ENCODE measurements at regions of chr20 and their contacts with region 1.

Region 1: DNA sequence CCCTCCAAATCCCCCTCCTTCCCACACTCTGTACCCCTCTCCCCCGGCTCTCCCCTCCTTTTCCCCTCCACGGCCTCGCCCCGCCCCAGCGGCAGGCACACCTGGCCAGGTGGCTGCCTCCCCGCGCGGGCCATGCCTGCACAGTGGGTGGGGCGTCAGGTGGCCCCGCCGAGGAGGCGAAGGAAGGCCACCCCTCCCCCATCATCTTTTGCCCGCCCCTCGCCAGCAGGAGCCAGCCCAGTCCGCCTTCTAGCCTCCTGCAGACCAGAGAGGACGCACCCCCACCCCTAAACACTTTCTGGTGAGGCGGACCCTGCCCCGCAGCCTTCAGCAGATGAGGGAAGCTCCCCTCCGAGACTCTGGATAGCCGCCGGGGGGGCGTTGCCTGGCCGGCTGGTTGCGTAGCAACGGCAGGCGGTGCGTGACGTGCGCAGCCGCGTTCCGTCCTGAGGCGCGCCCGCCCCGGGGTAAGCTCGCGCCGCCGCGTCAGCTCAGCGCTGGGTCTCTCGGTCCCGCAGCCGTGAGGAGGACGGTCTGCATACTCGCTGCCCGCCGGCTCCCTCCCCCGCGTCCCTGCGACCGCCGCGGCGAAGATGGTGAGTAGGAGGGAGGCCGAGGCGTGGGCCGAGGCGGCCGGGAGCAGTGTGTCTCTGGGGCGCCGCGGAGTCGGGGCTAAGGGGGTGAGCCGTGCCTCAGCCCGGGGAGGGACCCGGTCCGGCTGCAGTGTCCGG is at the start of gene DSTN:
- DNase-seq: peak; percentile 94 to 96 (median 95)
- ATAC-seq: peak; percentile 85 to 93 (median 90)
- H3K4me3 ChIP-seq: peak within 1 kb of the TSS; percentile 45 to 100 (median 93)
- H3K27ac ChIP-seq: peak within 1 kb of the TSS; percentile 91 to 100 (median 99)
- H3K4me1 ChIP-seq: peaks cover 0 to 47% (median 37%) of the 10 kb centered on the region in 12 donors
- H3K27me3 ChIP-seq: no peaks in the 10 kb centered on the region
- CTCF ChIP-seq: no peak
- POLR2A ChIP-seq: peak; percentile 21 to 98
- total RNA-seq, gene DSTN: 447 to 697 (median 546) TPM

Region 2: DNA sequence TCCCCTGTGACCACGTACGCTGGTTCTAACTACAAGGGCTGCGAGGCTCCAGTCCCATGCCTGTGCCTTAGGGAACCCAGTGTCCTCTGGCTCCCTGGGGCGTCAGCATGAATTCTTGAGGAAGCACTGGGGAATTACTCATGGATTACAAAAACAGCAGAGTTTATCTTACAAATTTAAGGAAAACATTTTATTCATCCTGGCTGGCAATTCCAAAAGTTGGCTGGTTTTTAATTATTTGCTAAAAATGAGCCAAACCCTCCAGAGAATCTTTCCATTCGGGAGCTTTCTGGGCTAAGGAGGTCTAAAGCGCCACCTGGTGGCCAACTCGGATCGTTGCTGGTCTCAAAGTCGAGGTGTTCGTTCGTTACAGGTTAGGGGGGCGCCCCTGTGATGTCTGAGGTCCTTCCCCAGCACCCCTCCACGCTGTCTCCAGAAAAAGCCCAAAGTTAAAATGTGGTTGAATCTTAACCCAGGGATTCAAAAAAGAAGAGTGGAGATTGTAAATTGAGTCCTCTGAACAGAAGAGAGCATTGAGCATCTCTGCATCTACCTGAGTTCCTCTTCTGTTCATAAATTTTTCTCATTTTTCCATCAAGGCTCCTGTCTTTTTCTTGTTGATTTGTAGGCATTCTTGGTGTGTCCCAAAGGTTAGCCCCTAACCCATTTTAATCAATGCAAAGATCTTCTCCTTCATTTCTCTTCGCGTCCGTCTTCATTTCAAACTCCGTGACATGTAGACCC is 138.0 kb before region 1 on chr20:
- intact Hi-C with region 1: no loop called
- DNase-seq: peak in 4 of 5 donors; percentile 16 to 40 (median 34)
- ATAC-seq: no peak
- H3K4me3 ChIP-seq: no peak overlapping the region
- H3K27ac ChIP-seq: no peak overlapping the region
- H3K4me1 ChIP-seq: peaks cover 0 to 5% (median 0%) of the 10 kb centered on the region in 12 donors
- H3K27me3 ChIP-seq: peaks cover 0 to 52% (median 15%) of the 10 kb centered on the region in 9 donors
- CTCF ChIP-seq: peak; percentile 62 to 93 (median 87)
- POLR2A ChIP-seq: no peak

Region 3: DNA sequence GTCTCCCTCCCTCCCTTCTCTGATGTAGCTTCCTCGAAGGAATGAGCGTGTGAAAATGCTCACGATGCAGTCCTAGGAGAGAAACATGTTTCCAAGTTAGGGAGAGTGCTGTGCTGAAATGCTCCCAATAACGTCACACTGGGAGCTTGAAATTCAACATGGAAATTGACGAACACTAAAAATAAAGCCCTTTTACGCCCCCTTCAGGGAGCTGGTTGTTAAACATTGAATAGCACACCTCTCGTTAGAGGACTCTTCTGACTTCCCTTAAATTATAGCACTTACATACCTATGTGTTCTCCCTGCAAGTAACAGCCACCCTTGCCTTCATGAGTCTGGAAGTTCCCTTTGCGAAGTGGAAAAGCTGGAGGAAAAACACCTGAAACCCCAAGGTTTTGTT is 127.2 kb before region 1 on chr20:
- intact Hi-C with region 1: no loop called
- DNase-seq: no peak
- ATAC-seq: no peak
- H3K4me3 ChIP-seq: no peak overlapping the region
- H3K27ac ChIP-seq: no peak overlapping the region
- H3K4me1 ChIP-seq: no peaks in the 10 kb centered on the region
- H3K27me3 ChIP-seq: peaks cover 0 to 41% (median 5%) of the 10 kb centered on the region in 9 donors
- CTCF ChIP-seq: no peak
- POLR2A ChIP-seq: no peak

Region 4: GRCh38 chr20:17536944-17537444 is 32.8 kb before region 1 on chr20:
- intact Hi-C with region 1: loop called in 3 of 10 experiments (anchors 2 to 5 kb)
- DNase-seq: peak in 4 of 5 donors; percentile 54 to 75 (median 69)
- ATAC-seq: peak; percentile 93 to 99 (median 98)
- H3K4me3 ChIP-seq: no peak overlapping the region
- H3K27ac ChIP-seq: peak overlapping the region in 2 of 12 donors; percentile 7 to 64
- H3K4me1 ChIP-seq: peaks cover 0 to 11% (median 0%) of the 10 kb centered on the region in 12 donors
- H3K27me3 ChIP-seq: no peaks in the 10 kb centered on the region
- CTCF ChIP-seq: peak; percentile 72 to 93 (median 88)
- POLR2A ChIP-seq: no peak

Region 5: DNA sequence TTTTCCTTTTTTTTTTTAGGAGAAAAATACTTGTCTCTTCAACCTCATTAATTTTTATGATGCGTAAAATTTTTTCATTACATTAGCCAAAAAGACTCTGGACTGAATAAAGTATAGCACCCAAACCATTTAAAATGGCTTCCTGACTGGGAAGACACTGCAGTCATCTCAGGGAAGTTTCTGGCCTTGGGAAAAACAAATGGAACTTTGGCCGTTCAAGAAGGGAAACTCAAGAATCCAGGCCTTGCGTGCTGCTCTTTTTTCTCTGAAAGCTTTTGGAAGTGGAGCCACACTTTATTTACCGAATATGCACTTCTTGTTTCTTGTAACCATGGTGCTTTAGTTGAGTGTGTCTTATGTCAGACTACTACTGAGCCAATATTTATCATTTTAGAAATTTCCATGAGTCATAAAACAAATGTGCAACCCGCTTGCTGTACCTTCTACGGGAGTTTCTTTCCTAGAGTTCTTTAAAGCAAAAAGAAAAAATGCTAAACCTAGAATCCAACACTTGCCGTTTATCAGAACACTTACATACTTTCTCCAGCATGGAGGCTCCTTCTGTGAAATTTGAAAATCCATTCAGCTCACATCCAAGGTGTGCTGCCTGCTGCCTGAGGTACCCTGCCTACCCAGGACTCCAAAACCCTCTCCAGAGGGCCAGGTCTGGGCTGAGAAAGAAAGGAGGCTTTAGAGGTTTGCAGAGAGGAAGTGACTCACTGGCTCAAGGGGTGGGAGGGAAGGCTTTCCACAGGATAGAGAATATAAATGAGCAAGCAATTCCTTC is 11.4 kb before region 1 on chr20:
- intact Hi-C with region 1: loop called in 1 of 10 experiments (anchors 2 kb)
- DNase-seq: peak in 4 of 5 donors; percentile 37 to 69 (median 66)
- ATAC-seq: peak; percentile 52 to 89 (median 84)
- H3K4me3 ChIP-seq: peak overlapping the region in 4 of 12 donors; percentile 2 to 35 (median 12)
- H3K27ac ChIP-seq: peak overlapping the region in 11 of 12 donors; percentile 51 to 89 (median 78)
- H3K4me1 ChIP-seq: peaks cover 0 to 46% (median 24%) of the 10 kb centered on the region in 12 donors
- H3K27me3 ChIP-seq: no peaks in the 10 kb centered on the region
- CTCF ChIP-seq: no peak
- POLR2A ChIP-seq: peak in 1 of 2 donors; percentile 45

Region 6: GRCh38 chr20:17590245-17590644 is 20.5 kb after region 1 on chr20:
- intact Hi-C with region 1: loop called in 1 of 10 experiments (anchors 2 kb)
- DNase-seq: no peak
- ATAC-seq: peak in 3 of 4 donors; percentile 16 to 48 (median 43)
- H3K4me3 ChIP-seq: peak overlapping the region in 4 of 12 donors; percentile 3 to 11 (median 6)
- H3K27ac ChIP-seq: peak overlapping the region; percentile 16 to 80 (median 59)
- H3K4me1 ChIP-seq: peaks cover 14 to 97% (median 75%) of the 10 kb centered on the region in 12 donors
- H3K27me3 ChIP-seq: no peaks in the 10 kb centered on the region
- CTCF ChIP-seq: no peak
- POLR2A ChIP-seq: no peak

Region 7: DNA sequence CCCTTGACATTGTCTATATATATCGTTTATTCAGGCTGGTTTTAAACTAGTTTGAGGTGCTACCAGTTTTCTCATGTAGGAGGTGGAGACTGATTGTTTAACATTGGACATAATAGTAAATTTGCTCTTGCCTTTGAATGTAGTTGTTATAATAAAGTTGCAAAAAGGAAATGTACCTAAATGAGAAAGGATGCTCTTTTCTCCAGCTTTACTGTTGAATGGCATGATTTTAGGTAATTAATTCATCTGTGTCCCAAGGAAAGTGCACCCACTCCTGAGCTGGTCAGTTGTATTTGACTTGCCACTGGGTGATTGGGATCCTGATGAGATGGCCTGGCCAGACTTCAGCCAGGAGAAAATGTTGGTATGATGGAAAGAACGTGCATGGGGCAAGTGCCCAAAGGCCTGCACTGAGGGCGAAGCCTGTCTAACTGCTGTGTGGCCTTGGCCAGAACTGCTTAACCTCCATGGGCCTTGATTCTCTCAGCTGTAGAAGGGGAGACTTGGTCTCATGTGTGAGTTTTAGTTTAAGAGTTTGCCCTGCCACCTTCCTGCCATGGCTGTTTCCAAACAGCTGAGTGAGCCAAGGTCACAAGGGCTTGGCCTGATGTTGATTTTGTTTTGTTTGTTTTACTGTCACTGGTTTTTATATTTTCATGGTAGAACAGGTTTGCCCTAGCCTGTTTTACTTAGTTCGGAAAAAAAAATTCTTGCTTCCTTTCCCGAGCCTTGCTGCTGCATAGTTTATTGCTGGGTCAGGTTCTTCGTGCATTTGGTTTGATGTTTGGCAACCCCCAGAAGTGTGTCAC is 35.3 kb after region 1 on chr20:
- intact Hi-C with region 1: loop called in 8 of 10 experiments (anchors 5 kb)
- DNase-seq: no peak
- ATAC-seq: peak in 1 of 4 donors; percentile 13
- H3K4me3 ChIP-seq: no peak overlapping the region
- H3K27ac ChIP-seq: peak overlapping the region in 1 of 12 donors; percentile 43
- H3K4me1 ChIP-seq: peaks cover 0 to 30% (median 4%) of the 10 kb centered on the region in 12 donors
- H3K27me3 ChIP-seq: no peaks in the 10 kb centered on the region
- CTCF ChIP-seq: no peak
- POLR2A ChIP-seq: no peak

Region 8: DNA sequence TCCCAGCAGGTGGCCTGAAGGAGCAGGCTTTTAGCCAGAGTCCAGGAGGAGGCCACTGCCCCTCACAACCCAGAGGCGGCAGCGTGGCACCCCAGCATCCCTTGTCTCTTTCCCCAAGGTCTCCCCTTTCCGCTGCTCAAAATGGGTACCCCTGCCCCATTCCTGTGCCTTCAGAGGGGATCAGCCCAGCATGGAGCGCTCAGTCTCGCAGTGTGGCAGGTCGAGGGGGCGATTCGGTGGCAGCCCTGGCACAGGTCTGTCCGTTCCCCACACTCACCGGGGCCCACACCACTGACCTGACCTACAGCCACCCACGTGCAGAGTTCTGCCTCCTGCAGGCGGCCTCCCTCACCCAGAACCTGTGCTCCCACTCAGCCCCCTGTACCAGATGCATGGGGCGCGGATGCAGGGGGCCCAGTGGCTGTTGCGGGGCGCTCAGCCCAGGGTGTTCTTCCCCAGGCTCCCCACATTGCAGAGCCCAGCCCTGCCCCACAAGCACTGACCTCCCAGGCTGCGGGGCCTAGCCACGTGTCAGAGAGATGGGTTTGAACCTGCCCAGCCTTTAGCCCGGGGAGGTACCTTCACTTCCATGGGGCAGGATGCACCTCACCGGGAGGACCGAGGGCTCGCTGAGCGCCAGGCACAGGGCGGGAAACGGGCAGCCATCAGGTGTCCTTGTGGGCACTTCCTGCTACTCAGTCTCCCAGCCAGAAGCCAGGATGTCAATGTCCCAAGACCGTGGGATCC is 41.9 kb after region 1 on chr20:
- intact Hi-C with region 1: loop called in 8 of 10 experiments (anchors 5 kb)
- DNase-seq: peak in 1 of 5 donors; percentile 58
- ATAC-seq: peak in 3 of 4 donors; percentile 3 to 4 (median 3)
- H3K4me3 ChIP-seq: no peak overlapping the region
- H3K27ac ChIP-seq: peak overlapping the region in 11 of 12 donors; percentile 23 to 83 (median 52)
- H3K4me1 ChIP-seq: peaks cover 0 to 68% (median 50%) of the 10 kb centered on the region in 12 donors
- H3K27me3 ChIP-seq: no peaks in the 10 kb centered on the region
- CTCF ChIP-seq: peak in 2 of 12 donors; percentile 15 to 30
- POLR2A ChIP-seq: no peak